Heart left ventricle (tissue), 16 donors: ENCODE measurements at regions of chr12 and their contacts with region 1.

Region 1: DNA sequence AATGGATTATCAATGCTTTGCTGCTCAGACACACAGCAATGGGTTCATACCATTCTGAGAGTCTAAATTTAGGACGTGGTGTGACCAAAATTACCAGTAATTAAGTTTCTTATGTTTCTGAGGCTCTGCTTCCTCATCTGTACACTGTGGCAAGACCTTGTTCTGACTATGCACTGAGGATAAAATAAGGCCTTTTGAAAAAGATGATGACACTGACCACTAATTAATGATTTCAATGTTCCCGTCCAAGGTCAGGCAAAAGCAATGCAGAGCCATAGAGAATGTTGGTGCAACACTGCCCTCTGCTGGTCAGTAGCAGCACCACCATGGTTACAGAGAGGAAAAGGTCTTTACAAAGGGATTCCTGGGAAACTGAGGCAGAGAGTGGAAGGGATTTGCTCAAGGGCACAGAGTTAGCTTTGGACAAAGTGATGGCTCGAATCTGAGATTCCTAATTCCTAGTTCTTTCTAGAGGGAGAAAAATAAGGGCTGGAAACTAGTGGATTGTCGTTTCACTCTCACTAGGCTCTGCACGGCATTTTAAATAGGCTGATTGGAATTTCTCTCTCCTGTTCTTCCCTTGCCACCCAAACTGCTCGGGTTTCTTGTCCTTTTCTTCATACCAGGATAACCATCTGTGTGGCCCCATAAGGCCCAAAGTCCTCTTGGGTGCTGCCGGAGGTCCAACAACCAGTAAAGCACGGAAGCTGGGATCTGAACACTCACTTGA is 22.3 kb upstream of the P2RX7 start:
- DNase-seq: peak in 4 of 5 donors; percentile 43 to 62 (median 55)
- ATAC-seq: peak; percentile 58 to 80 (median 78)
- H3K4me3 ChIP-seq: no peak overlapping the region
- H3K27ac ChIP-seq: no peak overlapping the region
- H3K4me1 ChIP-seq: no peaks in the 10 kb centered on the region
- H3K27me3 ChIP-seq: no peaks in the 10 kb centered on the region
- CTCF ChIP-seq: peak; percentile 87 to 98 (median 92)
- POLR2A ChIP-seq: no peak

Region 2: GRCh38 chr12:120317224-120318105 is 792.9 kb before region 1 on chr12:
- intact Hi-C with region 1: loop called in 1 of 10 experiments (anchors 10 kb)
- DNase-seq: peak; percentile 99
- ATAC-seq: peak; percentile 100
- H3K4me3 ChIP-seq: peak overlapping the region; percentile 31 to 77 (median 64)
- H3K27ac ChIP-seq: peak overlapping the region in 11 of 12 donors; percentile 57 to 91 (median 84)
- H3K4me1 ChIP-seq: peaks cover 0 to 14% (median 8%) of the 10 kb centered on the region in 12 donors
- H3K27me3 ChIP-seq: no peaks in the 10 kb centered on the region
- CTCF ChIP-seq: peak; percentile 23 to 81 (median 52)
- POLR2A ChIP-seq: peak in 1 of 2 donors; percentile 87

Region 3: GRCh38 chr12:120640840-120641833 is 469.2 kb before region 1 on chr12:
- intact Hi-C with region 1: loop called in 2 of 10 experiments (anchors 10 kb)
- DNase-seq: peak; percentile 48 to 77 (median 63)
- ATAC-seq: peak; percentile 70 to 96 (median 92)
- H3K4me3 ChIP-seq: peak overlapping the region in 10 of 12 donors; percentile 29 to 62 (median 44)
- H3K27ac ChIP-seq: no peak overlapping the region
- H3K4me1 ChIP-seq: peaks cover 0 to 19% (median 11%) of the 10 kb centered on the region in 12 donors
- H3K27me3 ChIP-seq: peaks cover 11 to 62% (median 45%) of the 10 kb centered on the region in 9 donors
- CTCF ChIP-seq: no peak
- POLR2A ChIP-seq: no peak

Region 4: GRCh38 chr12:120944645-120945231 is 165.6 kb before region 1 on chr12:
- intact Hi-C with region 1: loop called in 1 of 10 experiments (anchors 10 kb)
- DNase-seq: peak; percentile 38 to 63 (median 41)
- ATAC-seq: peak in 2 of 4 donors; percentile 44 to 47
- H3K4me3 ChIP-seq: no peak overlapping the region
- H3K27ac ChIP-seq: no peak overlapping the region
- H3K4me1 ChIP-seq: peaks cover 0 to 4% (median 0%) of the 10 kb centered on the region in 12 donors
- H3K27me3 ChIP-seq: no peaks in the 10 kb centered on the region
- CTCF ChIP-seq: peak; percentile 46 to 75 (median 59)
- POLR2A ChIP-seq: no peak

Region 5: DNA sequence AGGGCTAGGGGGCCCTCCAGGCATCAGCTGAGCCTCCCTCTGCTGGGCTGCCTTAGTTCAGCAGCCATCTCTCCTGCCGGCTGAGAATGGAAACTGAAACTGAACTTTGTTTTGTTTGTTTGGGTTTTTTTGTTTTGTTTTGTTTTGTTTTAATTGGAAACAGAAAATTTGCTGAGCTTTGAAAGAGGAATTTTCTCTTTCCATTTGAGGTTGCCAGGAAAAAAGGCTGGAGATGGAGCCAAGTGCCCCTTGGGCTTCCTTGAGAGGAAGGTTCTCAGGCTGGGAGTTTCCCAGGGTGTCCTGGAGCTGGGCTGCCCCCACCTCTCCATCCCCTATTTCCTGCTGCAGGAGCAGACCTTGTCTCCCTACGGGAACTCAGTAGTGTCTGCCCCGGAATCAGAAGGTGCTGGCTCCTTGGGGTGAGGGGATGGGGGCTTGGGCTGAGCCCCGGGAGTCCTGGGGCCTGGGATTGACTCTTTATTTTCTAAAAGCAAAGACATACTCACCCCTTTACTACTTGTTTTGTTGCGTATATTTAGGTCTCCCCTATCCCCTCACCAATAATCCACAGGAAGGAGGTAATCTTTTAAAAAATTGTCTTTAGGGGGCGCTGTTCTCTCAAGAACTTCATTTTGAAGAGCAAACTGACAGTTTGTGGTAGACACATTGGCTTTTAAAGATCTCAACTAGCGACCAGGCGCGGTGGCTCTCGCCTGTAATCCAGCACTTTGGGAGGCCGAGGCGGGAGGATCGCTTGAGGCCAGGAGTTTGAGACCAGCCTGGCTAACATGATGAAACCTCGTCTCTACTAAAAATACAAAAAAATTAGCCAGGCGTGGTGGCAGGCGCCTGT is 50.0 kb before region 1 on chr12:
- intact Hi-C with region 1: loop called in 1 of 10 experiments (anchors 5 kb)
- DNase-seq: peak in 3 of 5 donors; percentile 37 to 50 (median 43)
- ATAC-seq: peak; percentile 65 to 95 (median 81)
- H3K4me3 ChIP-seq: peak overlapping the region in 10 of 12 donors; percentile 1 to 54 (median 40)
- H3K27ac ChIP-seq: peak overlapping the region; percentile 17 to 89 (median 70)
- H3K4me1 ChIP-seq: peaks cover 0 to 13% (median 3%) of the 10 kb centered on the region in 12 donors
- H3K27me3 ChIP-seq: no peaks in the 10 kb centered on the region
- CTCF ChIP-seq: peak; percentile 26 to 57 (median 44)
- POLR2A ChIP-seq: no peak

Region 6: DNA sequence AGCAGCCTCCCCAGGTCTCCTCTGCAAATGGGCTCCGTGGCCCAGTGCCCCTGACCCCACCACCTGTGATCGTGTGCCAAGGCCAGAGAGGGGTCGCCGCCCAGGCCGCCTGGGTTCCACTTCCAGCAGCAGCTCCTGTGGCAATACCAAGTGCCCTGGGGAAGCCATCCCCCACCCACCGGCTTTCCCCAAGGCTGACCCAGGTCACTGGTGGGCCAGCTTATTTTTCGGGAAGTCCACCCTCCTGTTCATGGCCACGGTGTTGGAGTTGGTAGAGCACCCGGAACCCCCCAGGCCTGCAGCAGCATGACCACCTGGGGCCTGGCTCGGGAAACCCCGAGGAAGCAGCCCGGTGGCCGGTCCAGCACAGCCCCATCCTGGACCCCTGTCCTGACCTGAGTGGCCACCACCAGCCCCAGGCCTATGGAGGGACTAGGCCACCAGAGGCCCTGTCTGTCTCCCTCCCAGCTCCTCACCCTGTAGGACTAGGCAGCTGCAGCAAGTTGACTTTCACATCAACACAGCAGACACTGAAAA is 30.6 kb before region 1 on chr12:
- intact Hi-C with region 1: no loop called
- DNase-seq: no peak
- ATAC-seq: no peak
- H3K4me3 ChIP-seq: no peak overlapping the region
- H3K27ac ChIP-seq: no peak overlapping the region
- H3K4me1 ChIP-seq: no peaks in the 10 kb centered on the region
- H3K27me3 ChIP-seq: no peaks in the 10 kb centered on the region
- CTCF ChIP-seq: no peak
- POLR2A ChIP-seq: no peak

Region 7: GRCh38 chr12:121144416-121144914 is 34.1 kb after region 1 on chr12:
- intact Hi-C with region 1: no loop called
- DNase-seq: no peak
- ATAC-seq: peak in 2 of 4 donors; percentile 56 to 62
- H3K4me3 ChIP-seq: no peak overlapping the region
- H3K27ac ChIP-seq: peak overlapping the region in 1 of 12 donors; percentile 82
- H3K4me1 ChIP-seq: peaks cover 0 to 36% (median 0%) of the 10 kb centered on the region in 12 donors
- H3K27me3 ChIP-seq: no peaks in the 10 kb centered on the region
- CTCF ChIP-seq: no peak
- POLR2A ChIP-seq: no peak

Region 8: GRCh38 chr12:121232977-121233627 is 122.7 kb after region 1 on chr12:
- intact Hi-C with region 1: loop called in 1 of 10 experiments (anchors 5 kb)
- DNase-seq: no peak
- ATAC-seq: no peak
- H3K4me3 ChIP-seq: no peak overlapping the region
- H3K27ac ChIP-seq: no peak overlapping the region
- H3K4me1 ChIP-seq: peaks cover 0 to 7% (median 0%) of the 10 kb centered on the region in 12 donors
- H3K27me3 ChIP-seq: no peaks in the 10 kb centered on the region
- CTCF ChIP-seq: no peak
- POLR2A ChIP-seq: no peak